ENCODE measurements at regions of chr1 and their contacts with region 1.

Region 1: GRCh38 chr1:117674521-117675397 is 68.9 kb downstream of the TENT5C start:
- DNase-seq: peak; percentile 71
- H3K4me3 Mint-ChIP-seq: no peak overlapping the region
- H3K27ac Mint-ChIP-seq: no peak overlapping the region
- H3K4me1 Mint-ChIP-seq: peaks cover 31% of the 10 kb centered on the region
- H3K27me3 Mint-ChIP-seq: no peaks in the 10 kb centered on the region

Region 2: DNA sequence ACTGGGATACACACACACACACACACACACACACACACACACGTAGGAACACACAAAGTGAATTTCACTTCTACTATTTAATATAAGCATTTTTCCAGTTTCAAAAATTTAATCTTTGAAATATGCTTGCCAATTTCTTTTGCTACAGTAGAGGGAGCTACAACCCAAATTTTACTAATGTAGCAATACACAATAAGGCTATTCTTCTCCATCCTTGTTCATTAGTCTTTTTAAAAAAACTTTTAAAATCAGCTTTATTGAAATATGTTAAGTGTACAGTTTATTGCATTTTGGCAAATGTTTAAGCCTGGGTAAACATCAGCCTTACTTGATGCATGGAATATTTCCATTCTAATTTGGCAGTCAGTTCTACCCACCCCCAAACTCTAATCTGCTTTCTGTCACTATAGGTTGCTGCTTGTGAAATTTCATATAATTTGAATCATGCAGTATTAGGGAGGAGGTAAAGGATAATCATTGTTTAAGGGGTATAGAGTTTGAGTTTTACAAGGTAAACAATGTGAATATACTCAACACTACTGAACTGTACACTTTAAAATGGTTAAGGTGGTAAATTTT is 161.9 kb before region 1 on chr1:
- CTCF ChIA-PET with region 1: interaction called, 22 read pairs
- POLR2A ChIA-PET with region 1: no interaction called
- DNase-seq: no peak
- H3K4me3 Mint-ChIP-seq: no peak overlapping the region
- H3K27ac Mint-ChIP-seq: no peak overlapping the region
- H3K4me1 Mint-ChIP-seq: no peaks in the 10 kb centered on the region
- H3K27me3 Mint-ChIP-seq: no peaks in the 10 kb centered on the region

Region 3: GRCh38 chr1:117605774-117606648 is 68.7 kb before region 1 on chr1 and contains the start of gene TENT5C:
- CTCF ChIA-PET with region 1: interaction called, 29 read pairs
- POLR2A ChIA-PET with region 1: interaction called, 24 read pairs
- DNase-seq: peak; percentile 99
- H3K4me3 Mint-ChIP-seq: peak within 1 kb of the TSS; percentile 97
- H3K27ac Mint-ChIP-seq: peak within 1 kb of the TSS; percentile 95
- H3K4me1 Mint-ChIP-seq: peaks cover 46% of the 10 kb centered on the region
- H3K27me3 Mint-ChIP-seq: peaks cover 17% of the 10 kb centered on the region
- total RNA-seq, gene TENT5C: 64.5 to 66.1 TPM

Region 4: GRCh38 chr1:117612517-117613248 is 62.1 kb before region 1 on chr1:
- CTCF ChIA-PET with region 1: interaction called, 29 read pairs
- POLR2A ChIA-PET with region 1: interaction called, 24 read pairs
- DNase-seq: no peak
- H3K4me3 Mint-ChIP-seq: no peak overlapping the region
- H3K27ac Mint-ChIP-seq: peak overlapping the region; percentile 55
- H3K4me1 Mint-ChIP-seq: peaks cover 96% of the 10 kb centered on the region
- H3K27me3 Mint-ChIP-seq: no peaks in the 10 kb centered on the region

Region 5: DNA sequence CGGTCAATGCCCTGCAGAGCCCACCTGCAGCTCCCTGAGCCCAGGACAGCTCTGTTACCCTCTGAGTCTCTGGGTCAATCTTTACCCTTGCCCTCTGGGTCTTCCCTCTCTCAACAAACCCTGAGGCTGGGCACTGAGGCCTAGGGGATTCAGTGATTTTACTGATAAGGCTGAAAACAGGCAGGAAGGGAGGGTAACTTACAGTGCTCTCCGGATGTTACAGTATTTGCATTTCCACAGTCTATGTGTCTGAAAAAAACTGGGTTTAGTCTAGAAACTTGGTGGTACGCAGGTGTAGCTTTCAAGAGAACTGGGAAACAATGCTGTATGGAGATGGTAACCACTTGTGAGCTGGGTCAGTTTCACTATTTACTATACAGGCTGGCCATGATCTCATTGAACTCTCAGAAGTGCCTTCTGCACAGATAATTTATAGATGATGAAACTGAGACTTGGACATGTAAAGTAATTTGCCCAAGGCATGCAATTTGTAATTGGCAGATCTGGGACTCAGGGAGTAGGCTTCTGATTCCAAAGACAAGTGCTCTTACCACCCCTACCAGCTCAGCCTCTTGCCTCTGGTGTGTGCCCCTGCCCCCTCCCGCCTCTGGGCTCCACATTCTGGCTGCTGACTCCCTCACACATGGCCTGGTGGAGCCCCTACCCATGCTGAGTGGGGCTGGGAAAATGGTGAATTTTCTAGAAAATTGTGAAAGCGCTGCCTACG is 20.1 kb before region 1 on chr1:
- CTCF ChIA-PET with region 1: interaction called, 49 read pairs
- POLR2A ChIA-PET with region 1: interaction called, 8 read pairs
- DNase-seq: no peak
- H3K4me3 Mint-ChIP-seq: peak overlapping the region; percentile 29
- H3K27ac Mint-ChIP-seq: peak overlapping the region; percentile 91
- H3K4me1 Mint-ChIP-seq: peaks cover 86% of the 10 kb centered on the region
- H3K27me3 Mint-ChIP-seq: no peaks in the 10 kb centered on the region

Region 6: DNA sequence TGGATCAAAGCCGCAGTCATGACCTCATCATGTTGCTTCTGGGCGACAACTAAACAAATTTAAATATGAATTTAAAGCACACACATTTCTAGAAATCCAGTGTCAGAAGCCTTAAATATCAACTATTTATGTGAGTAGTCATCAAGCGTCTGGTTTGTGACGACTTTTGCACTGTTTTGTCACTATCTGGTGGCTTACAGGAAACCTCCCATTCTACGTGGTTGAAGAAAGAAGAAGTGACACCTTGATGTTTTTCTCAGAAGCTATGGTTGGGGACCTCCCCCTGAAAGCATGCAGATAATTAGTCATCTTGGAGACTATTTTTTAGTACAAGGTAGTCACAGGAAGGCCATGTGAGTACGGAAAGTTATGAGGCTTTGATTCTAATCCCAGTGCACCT is 10.4 kb before region 1 on chr1:
- CTCF ChIA-PET with region 1: interaction called, 49 read pairs
- POLR2A ChIA-PET with region 1: interaction called, 8 read pairs
- DNase-seq: peak; percentile 76
- H3K4me3 Mint-ChIP-seq: peak overlapping the region; percentile 8
- H3K27ac Mint-ChIP-seq: peak overlapping the region; percentile 92
- H3K4me1 Mint-ChIP-seq: peaks cover 82% of the 10 kb centered on the region
- H3K27me3 Mint-ChIP-seq: no peaks in the 10 kb centered on the region

Measured in activated CD4-positive, alpha-beta memory T cell treated with anti-CD3 and anti-CD28 coated beads, Interleukin-2, amount 10 ng/mL, durations not matched to agents 7 days and 5 days (primary cell).